Activated CD4-positive, alpha-beta T cell treated with anti-CD3 and anti-CD28 coated beads, Interleukin-2, amount 10 ng/mL, durations not matched to agents 24 days and 14 days (primary cell): ENCODE measurements at regions of chr14 and their contacts with region 1.

Region 1: GRCh38 chr14:99213101-99213500 is 58.9 kb downstream of the BCL11B start:
- DNase-seq: no peak
- H3K4me3 Mint-ChIP-seq: peak overlapping the region; percentile 75
- H3K27ac Mint-ChIP-seq: peak overlapping the region; percentile 82
- H3K4me1 Mint-ChIP-seq: peaks cover 86% of the 10 kb centered on the region
- H3K27me3 Mint-ChIP-seq: no peaks in the 10 kb centered on the region

Region 2: DNA sequence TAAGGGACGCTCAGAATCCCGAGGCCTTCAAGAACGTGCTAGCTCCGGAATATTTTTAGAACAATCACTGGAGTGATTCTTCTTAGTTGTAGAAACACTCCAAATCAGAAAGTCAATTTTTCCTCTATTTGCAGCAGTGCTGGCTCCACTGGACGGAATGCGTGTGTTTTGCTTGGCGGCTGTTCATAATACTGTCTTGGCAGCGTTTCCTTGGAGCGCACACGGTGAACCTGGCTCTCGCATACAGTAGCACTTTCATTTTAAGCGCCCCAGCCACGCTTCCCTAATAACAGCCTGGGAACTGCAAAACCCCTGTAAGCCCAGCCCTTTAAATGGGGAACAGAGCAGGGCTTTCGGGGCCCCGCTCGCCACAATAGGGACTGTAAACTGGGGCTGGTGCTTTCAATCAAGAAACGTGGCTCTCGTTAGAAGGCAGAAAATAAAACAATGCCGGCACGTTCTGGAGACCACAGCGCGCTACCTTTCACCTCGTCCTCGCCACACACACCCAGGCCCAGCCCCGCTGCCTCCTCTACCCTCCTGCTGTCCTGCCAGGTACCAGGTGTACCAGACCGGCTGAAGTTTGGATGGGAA is 21.0 kb before region 1 on chr14:
- intact Hi-C with region 1: loop called (anchors 2 kb)
- DNase-seq: peak; percentile 80
- H3K4me3 Mint-ChIP-seq: peak overlapping the region; percentile 90
- H3K27ac Mint-ChIP-seq: peak overlapping the region; percentile 89
- H3K4me1 Mint-ChIP-seq: peaks cover 89% of the 10 kb centered on the region
- H3K27me3 Mint-ChIP-seq: no peaks in the 10 kb centered on the region

Region 3: DNA sequence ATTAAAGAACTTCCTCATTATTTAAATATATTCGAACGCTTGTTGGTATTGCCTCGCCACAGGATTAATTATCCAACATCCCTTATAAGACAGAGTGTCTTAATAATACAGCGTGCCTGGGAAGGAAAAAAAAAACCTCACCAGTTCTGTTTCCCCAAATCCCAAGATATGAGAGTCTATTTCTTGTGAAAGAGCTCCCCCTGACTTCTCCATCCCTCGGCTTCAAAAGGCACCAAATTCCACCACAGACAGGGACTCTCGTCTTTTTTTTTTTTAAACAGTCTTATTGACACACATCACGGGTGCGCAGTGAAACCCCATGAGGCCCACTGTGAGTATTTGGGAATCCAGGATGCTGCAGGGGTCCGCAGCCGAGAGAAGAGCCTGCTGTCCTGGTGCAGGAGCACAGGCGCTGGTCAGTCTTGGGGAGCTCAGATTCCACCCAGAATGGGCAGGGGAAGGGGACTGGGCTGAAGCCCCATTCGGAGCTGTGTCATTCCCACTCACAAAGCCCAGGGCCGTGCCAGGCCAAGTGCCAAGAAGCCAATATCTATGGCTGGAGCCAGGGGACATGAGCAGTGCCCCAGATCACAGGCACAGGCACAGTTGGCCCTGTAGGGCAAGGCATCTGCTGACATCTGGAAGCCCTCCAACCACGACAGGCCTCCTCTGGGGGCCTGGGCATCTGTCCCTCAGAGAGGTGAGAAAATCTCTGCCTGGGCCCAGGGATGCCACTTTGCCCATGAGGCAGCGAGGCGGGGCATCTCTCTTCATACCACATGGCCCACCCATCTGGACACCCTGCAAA is 13.1 kb before region 1 on chr14:
- intact Hi-C with region 1: loop called (anchors 1 kb)
- DNase-seq: no peak
- H3K4me3 Mint-ChIP-seq: peak overlapping the region; percentile 58
- H3K27ac Mint-ChIP-seq: peak overlapping the region; percentile 89
- H3K4me1 Mint-ChIP-seq: peaks cover 92% of the 10 kb centered on the region
- H3K27me3 Mint-ChIP-seq: no peaks in the 10 kb centered on the region